ENCODE measurements at regions of chr4 and their contacts with region 1.

Region 1: GRCh38 chr4:169270810-169271691 is at the start of gene SH3RF1:
- DNase-seq: peak; percentile 83
- ATAC-seq: peak; percentile 73
- H3K4me3 ChIP-seq: peak within 1 kb of the TSS; percentile 87
- H3K27ac ChIP-seq: peak within 1 kb of the TSS; percentile 72
- H3K4me1 ChIP-seq: peaks cover 30% of the 10 kb centered on the region
- H3K27me3 ChIP-seq: no peaks in the 10 kb centered on the region
- CTCF ChIP-seq: no peak; the same call in 1 of the 2 replicates
- total RNA-seq, gene SH3RF1: 20.2 and 21.0 TPM in 2 replicates

Region 2: DNA sequence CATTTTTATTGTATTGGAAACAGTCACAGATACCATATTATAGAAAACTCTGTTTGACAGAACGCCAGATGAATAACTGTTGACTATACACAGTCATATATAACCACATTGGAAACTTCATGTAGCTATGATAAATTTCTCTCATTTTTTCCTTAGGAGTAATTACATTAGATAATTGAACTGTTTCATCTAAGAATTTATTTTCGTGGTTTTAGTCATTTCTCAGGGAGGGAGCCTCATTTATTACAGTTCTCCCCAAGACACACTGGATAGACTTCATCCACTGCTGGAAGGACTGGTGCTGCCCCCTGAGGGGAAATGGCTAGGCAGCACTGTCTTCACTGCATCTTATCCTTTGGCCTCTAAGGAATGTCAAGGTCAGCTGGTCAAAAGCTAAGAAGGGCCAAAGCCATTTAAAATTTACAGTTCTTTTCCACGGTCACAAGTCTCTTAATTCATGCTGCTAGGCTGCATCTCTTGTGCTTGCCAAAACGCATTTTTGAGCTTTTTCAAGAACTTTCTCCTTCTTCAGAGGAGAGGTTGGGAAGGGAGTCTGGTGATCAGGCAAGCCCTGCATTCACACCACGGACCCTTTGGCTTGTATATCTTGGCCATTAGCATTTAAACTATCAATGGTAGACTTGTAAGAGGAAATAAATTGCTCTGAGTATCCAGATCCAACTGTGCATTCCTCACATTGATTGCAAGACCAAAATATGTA is 406.1 kb before region 1 on chr4:
- CTCF ChIA-PET with region 1: no interaction called
- POLR2A ChIA-PET with region 1: no interaction called
- intact Hi-C with region 1: no loop called
- DNase-seq: peak; percentile 35
- ATAC-seq: peak; percentile 38; the same call in 1 of the 2 replicates
- H3K4me3 ChIP-seq: no peak overlapping the region
- H3K27ac ChIP-seq: no peak overlapping the region
- H3K4me1 ChIP-seq: peaks cover 7% of the 10 kb centered on the region; the same call in 1 of the 2 replicates
- H3K27me3 ChIP-seq: no peaks in the 10 kb centered on the region
- CTCF ChIP-seq: peak; percentile 41; the same call in 1 of the 2 replicates

Region 3: GRCh38 chr4:169024762-169025161 is 246.3 kb before region 1 on chr4:
- CTCF ChIA-PET with region 1: no interaction called
- POLR2A ChIA-PET with region 1: no interaction called
- intact Hi-C with region 1: loop called (anchors 5 kb)
- DNase-seq: peak; percentile 68
- ATAC-seq: peak; percentile 84
- H3K4me3 ChIP-seq: no peak overlapping the region
- H3K27ac ChIP-seq: no peak overlapping the region
- H3K4me1 ChIP-seq: peaks cover 7% of the 10 kb centered on the region; the same call in 1 of the 2 replicates
- H3K27me3 ChIP-seq: no peaks in the 10 kb centered on the region
- CTCF ChIP-seq: peak; percentile 78

Region 4: GRCh38 chr4:169152899-169153298 is 118.2 kb before region 1 on chr4:
- CTCF ChIA-PET with region 1: no interaction called
- POLR2A ChIA-PET with region 1: no interaction called
- intact Hi-C with region 1: loop called (anchors 5 kb)
- DNase-seq: no peak
- ATAC-seq: no peak
- H3K4me3 ChIP-seq: no peak overlapping the region
- H3K27ac ChIP-seq: no peak overlapping the region
- H3K4me1 ChIP-seq: peaks cover 26% of the 10 kb centered on the region
- H3K27me3 ChIP-seq: no peaks in the 10 kb centered on the region
- CTCF ChIP-seq: peak; percentile 32; the same call in 1 of the 2 replicates

Region 5: GRCh38 chr4:169201222-169202144 is 69.6 kb before region 1 on chr4:
- CTCF ChIA-PET with region 1: no interaction called
- POLR2A ChIA-PET with region 1: no interaction called
- intact Hi-C with region 1: loop called (anchors 2 kb)
- DNase-seq: no peak
- ATAC-seq: 0 out of 2 replicates have a peak, but pooled peaks have one; percentile 17
- H3K4me3 ChIP-seq: no peak overlapping the region
- H3K27ac ChIP-seq: peak overlapping the region; percentile 26; the same call in 1 of the 2 replicates
- H3K4me1 ChIP-seq: peaks cover 30% of the 10 kb centered on the region
- H3K27me3 ChIP-seq: no peaks in the 10 kb centered on the region
- CTCF ChIP-seq: no peak

Region 6: DNA sequence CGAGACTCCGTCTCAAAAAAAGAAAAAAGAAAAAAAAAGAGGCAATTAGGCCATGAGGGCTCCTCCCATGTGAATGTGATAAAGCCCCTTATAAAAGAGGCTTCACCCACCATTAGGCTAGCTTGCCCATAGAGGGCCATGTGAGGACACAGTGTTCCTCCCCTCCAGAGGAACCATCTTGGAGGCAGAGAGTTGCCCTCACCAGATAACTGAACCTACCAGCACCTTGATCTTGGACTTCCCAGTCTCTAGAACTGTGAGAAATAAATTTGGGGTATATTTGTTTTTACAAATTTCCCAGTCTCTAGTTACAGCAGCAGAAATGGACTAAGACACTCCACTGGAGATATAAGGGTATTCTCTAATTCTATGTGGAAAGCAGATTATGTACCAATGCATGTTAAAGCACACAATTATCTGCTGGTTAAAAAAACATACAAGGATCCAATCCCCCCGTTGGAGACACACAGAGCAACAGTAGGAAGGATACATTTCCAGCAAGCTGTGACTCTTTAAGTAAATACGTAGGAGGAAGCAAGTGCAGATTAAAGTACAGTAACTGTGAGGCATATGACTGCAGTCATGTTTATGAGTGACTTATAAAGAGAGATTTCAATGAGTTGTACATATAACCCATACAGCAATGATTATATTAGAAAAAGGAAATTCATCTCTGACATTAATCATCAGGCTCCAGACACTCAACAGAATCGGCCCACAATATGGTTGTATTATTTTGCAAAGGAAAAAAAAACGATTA is 21.7 kb before region 1 on chr4:
- CTCF ChIA-PET with region 1: no interaction called
- POLR2A ChIA-PET with region 1: interaction called, 6 read pairs
- intact Hi-C with region 1: loop called (anchors 1 kb)
- DNase-seq: peak; percentile 82
- ATAC-seq: peak; percentile 83
- H3K4me3 ChIP-seq: peak overlapping the region; percentile 45
- H3K27ac ChIP-seq: peak overlapping the region; percentile 86
- H3K4me1 ChIP-seq: peaks cover 55% of the 10 kb centered on the region
- H3K27me3 ChIP-seq: no peaks in the 10 kb centered on the region
- CTCF ChIP-seq: no peak

Region 7: DNA sequence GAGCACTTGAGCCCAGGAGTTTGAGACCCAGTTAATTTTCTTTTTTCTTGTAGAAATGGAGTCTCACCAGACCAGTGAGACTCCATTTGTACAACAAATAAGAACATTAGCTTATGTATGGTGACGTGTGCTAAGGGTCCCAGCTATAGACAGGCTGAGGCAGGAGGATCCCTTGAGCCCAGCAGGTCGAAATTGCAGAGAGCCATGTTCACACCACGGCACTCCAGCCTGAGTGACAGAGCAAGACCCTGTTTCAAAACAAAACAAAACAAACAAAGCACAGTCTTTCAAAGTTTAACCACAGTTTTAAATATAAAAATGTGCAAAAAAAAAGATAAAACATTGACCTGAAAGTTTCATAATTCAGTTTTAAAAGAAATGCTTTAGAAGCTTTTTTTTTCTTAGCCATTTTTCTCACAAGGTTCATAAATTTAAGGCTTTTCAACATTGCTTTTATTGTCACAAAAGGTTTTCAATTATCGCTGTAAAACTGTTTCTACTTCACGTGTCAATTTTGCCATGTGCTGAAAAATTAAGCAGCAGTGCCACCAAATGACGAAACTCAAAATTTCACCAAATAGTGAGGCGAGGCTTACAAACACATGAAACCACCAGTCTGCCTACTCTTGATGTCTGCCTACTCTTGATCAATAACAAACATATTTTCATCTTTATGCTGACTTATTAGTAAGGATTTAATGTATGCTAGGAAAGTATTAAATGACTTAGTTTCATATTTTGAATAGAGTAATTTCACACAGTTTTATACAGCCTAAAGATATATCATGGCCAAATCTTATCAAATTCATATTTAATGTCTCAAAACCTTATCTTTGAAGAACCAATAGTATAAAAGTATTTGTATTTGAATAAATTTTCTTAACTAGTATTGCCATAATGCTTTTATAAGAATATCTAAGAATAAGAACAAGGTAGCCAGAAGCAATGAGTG is 215.0 kb after region 1 on chr4:
- CTCF ChIA-PET with region 1: no interaction called
- POLR2A ChIA-PET with region 1: no interaction called
- intact Hi-C with region 1: loop called (anchors 1 kb)
- DNase-seq: peak; percentile 74
- ATAC-seq: peak; percentile 54; the same call in 1 of the 2 replicates
- H3K4me3 ChIP-seq: peak overlapping the region; percentile 28
- H3K27ac ChIP-seq: no peak overlapping the region
- H3K4me1 ChIP-seq: peaks cover 18% of the 10 kb centered on the region
- H3K27me3 ChIP-seq: no peaks in the 10 kb centered on the region
- CTCF ChIP-seq: peak; percentile 75

Region 8: GRCh38 chr4:169566021-169566818 is 295.2 kb after region 1 on chr4:
- CTCF ChIA-PET with region 1: no interaction called
- POLR2A ChIA-PET with region 1: no interaction called
- intact Hi-C with region 1: no loop called
- DNase-seq: peak; percentile 55
- ATAC-seq: peak; percentile 42
- H3K4me3 ChIP-seq: no peak overlapping the region
- H3K27ac ChIP-seq: no peak overlapping the region
- H3K4me1 ChIP-seq: no peaks in the 10 kb centered on the region
- H3K27me3 ChIP-seq: no peaks in the 10 kb centered on the region
- CTCF ChIP-seq: peak; percentile 79

Region 9: GRCh38 chr4:169604131-169604900 is 333.3 kb after region 1 on chr4:
- CTCF ChIA-PET with region 1: no interaction called
- POLR2A ChIA-PET with region 1: no interaction called
- intact Hi-C with region 1: no loop called
- DNase-seq: peak; percentile 67
- ATAC-seq: peak; percentile 94
- H3K4me3 ChIP-seq: no peak overlapping the region
- H3K27ac ChIP-seq: peak overlapping the region; percentile 14; the same call in 1 of the 2 replicates
- H3K4me1 ChIP-seq: peaks cover 14% of the 10 kb centered on the region
- H3K27me3 ChIP-seq: no peaks in the 10 kb centered on the region
- CTCF ChIP-seq: no peak

Measured in PC-3 (cell line).